ENCODE measurements at regions of chr9 and their contacts with region 1.

Region 1: GRCh38 chr9:122912964-122913673 is at the start of gene ZBTB6:
- DNase-seq: peak; percentile 91
- total RNA-seq, gene ZBTB6: 6.6 TPM

Region 2: DNA sequence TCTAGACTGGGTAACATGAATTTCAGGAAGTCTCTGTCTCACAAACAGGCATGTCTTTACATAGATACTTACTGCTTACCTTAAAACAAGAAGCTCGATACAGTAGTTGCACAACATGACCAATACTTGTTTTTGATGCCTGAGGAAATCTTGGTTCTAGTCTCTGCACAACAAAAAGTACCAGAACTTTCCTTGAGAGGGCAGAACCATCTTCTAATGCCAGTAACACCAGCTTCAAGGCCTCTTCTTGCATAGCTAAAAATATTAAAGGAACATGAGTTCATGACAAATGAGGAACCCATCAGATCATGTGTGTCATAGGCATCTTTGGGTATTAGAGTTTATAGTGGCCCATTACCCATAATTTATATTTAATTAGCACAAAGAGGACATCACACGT is 30.0 kb before region 1 on chr9:
- intact Hi-C with region 1: no loop called
- DNase-seq: no peak

Region 3: GRCh38 chr9:122931226-122932121 is 18.4 kb after region 1 on chr9 and contains the start of gene ZBTB26:
- intact Hi-C with region 1: loop called (anchors 2 kb)
- DNase-seq: peak; percentile 98
- total RNA-seq, gene ZBTB26: 4.1 TPM

Measured in cardiac septum (tissue), 1 donor.